GM23248 (cell line): ENCODE measurements at regions of chr12 and their contacts with region 1.

Region 1: GRCh38 chr12:43882578-43883178 is 46.8 kb downstream of the TMEM117 start:
- DNase-seq: peak; percentile 83
- H3K4me3 ChIP-seq: no peak overlapping the region
- H3K27ac ChIP-seq: no peak overlapping the region
- H3K4me1 ChIP-seq: no peaks in the 10 kb centered on the region
- H3K27me3 ChIP-seq: no peaks in the 10 kb centered on the region

Region 2: GRCh38 chr12:43453761-43454160 is 428.9 kb before region 1 on chr12:
- in situ Hi-C with region 1: loop called (anchors 25 kb)
- DNase-seq: peak; percentile 3
- H3K4me3 ChIP-seq: no peak overlapping the region
- H3K27ac ChIP-seq: no peak overlapping the region
- H3K4me1 ChIP-seq: no peaks in the 10 kb centered on the region
- H3K27me3 ChIP-seq: no peaks in the 10 kb centered on the region

Region 3: GRCh38 chr12:44143175-44143574 is 260.5 kb after region 1 on chr12:
- in situ Hi-C with region 1: no loop called
- DNase-seq: no peak
- H3K4me3 ChIP-seq: no peak overlapping the region
- H3K27ac ChIP-seq: no peak overlapping the region
- H3K4me1 ChIP-seq: no peaks in the 10 kb centered on the region
- H3K27me3 ChIP-seq: no peaks in the 10 kb centered on the region